Adrenal gland (tissue), 19 donors: ENCODE measurements at regions of chr10 and their contacts with region 1.

Region 1: DNA sequence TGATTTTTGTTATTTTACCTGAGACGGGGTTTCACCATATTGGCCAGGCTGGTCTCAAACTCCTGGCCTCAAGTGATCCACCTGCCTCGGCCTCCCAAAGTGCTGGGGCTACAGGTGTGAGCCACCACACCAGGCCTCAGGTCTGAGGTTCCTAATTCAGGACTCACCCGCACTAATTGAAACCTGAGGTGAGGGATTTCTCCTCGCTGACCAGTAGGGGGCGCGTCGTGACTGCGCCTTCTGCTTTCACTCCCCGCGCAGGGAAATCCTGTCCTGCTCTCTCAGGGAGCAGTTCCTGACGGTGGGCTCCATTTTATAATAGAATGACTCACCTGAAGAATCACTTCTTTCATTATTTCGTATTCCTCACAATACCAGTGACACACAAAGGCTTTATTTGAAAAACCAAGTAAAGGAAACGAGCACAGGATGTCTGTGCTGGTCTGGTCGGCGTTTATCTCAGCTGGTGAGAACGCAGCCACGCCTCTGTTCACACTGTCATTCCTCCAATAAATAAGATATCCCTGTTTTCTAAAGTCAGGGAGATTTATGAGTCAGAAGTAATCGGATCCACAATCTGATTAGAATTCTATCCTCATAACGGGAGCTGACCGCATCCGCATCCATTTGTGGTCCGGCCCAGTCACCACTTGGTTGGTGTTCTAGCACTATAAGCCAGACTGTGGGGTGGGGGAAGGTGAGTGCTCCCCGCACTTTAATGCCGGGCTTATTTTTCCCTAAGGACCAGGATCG is 35.4 kb downstream of the BAG3 start:
- DNase-seq: peak; percentile 74 to 87 (median 81)
- H3K4me3 ChIP-seq: no peak overlapping the region
- H3K27ac ChIP-seq: peak overlapping the region in 2 of 5 donors; percentile 51 to 53
- H3K4me1 ChIP-seq: peaks cover 9 to 11% of the 10 kb centered on the region in 2 donors
- H3K27me3 ChIP-seq: no peaks in the 10 kb centered on the region
- CTCF ChIP-seq: peak; percentile 87 to 98 (median 92)
- POLR2A ChIP-seq: no peak

Region 2: DNA sequence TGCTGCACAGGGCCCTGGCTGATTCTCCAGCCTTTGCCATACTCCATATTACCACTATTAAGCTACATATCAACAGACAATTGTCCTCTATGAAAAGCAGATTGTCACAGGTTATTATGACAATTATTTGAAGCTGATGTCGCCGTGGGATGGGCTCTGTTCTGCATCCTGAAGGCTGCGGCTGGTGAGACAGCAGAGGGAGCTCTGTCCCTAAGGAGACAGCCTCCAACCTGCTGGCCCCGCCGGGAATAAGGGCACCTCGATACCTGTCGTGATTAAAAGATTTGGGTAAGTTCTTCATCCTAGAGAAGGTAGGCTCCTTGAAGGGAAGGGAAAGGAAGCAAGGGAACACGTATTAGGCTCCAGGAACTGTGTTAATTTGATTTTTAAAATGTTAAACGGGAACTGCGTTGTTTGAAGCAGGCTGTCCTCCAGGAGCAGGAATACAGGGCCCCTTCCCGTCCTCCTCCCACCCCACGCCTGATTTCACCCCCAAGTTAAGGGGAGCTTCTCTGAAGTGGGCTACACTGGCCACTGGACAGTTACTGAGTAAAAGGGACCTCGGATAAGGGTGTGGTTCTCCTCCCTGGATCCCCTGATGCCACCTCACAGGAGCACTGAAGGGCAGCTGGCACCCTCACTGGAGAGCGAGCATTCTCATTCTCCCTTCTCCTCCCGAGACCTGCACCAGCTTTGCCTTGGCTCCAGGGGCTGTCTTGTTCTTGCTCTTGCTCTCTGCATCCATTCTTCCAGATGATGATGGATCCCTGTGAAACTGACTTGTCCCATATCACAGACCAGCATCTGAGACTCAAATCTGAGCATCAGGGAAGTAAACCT is 78.1 kb before region 1 on chr10:
- intact Hi-C with region 1: loop called in 1 of 2 experiments (anchors 10 kb)
- DNase-seq: peak; percentile 44 to 85 (median 65)
- H3K4me3 ChIP-seq: no peak overlapping the region
- H3K27ac ChIP-seq: no peak overlapping the region
- H3K4me1 ChIP-seq: peaks cover 0 to 8% of the 10 kb centered on the region in 2 donors
- H3K27me3 ChIP-seq: no peaks in the 10 kb centered on the region
- CTCF ChIP-seq: peak; percentile 38 to 72 (median 58)
- POLR2A ChIP-seq: no peak

Region 3: GRCh38 chr10:119750391-119751230 is 64.0 kb after region 1 on chr10:
- intact Hi-C with region 1: loop called in 1 of 2 experiments (anchors 10 kb)
- DNase-seq: peak; percentile 66 to 91 (median 77)
- H3K4me3 ChIP-seq: no peak overlapping the region
- H3K27ac ChIP-seq: no peak overlapping the region
- H3K4me1 ChIP-seq: no peaks in the 10 kb centered on the region
- H3K27me3 ChIP-seq: no peaks in the 10 kb centered on the region
- CTCF ChIP-seq: peak; percentile 77 to 94 (median 92)
- POLR2A ChIP-seq: no peak

Region 4: DNA sequence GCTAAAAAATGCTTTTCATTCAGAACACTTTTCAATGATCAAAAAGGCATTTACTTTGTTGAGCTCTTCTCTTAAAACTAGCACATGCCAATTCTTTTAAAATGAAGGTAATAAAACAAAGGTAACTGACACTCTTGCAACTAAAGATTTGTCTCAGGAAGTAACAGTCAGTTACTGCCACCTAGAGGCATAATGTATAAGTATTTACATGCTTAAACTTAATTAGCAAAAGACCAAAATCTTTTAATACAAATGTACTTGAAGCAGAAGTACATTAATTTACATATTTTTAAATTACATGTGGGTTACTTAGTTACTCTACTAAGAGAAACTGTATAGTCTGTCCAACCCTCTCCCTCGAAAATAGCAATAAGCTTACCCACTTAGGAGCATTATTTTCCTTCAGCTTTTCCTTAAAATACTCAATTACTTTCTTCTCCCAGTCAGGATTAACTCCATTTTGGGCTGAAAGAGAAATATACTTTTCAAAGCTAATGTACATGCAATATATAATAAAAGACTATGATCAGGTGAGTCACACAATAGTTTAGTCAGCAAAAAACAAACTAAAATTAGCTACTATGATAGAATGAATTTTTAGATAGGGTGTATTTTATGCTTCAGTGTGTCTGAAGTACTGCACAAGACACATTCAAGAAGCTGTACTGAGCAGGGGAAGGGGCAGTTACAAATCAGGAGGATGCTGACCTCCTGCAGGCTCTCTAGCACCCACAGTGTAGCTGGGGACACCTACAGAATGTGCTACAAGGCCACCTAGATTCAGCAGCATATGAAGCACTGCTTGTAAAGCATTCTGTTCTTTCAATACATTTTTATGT is 173.0 kb after region 1 on chr10:
- intact Hi-C with region 1: loop called in 1 of 2 experiments (anchors 5 kb)
- DNase-seq: no peak
- H3K4me3 ChIP-seq: no peak overlapping the region
- H3K27ac ChIP-seq: no peak overlapping the region
- H3K4me1 ChIP-seq: no peaks in the 10 kb centered on the region
- H3K27me3 ChIP-seq: no peaks in the 10 kb centered on the region
- CTCF ChIP-seq: peak; percentile 29 to 73 (median 55)
- POLR2A ChIP-seq: no peak